ENCODE measurements at regions of chr2 and their contacts with region 1.

Region 1: GRCh38 chr2:223957092-223957851 is at the start of gene MRPL44:
- DNase-seq: peak; percentile 94 to 99 (median 97)
- H3K4me3 ChIP-seq: peak within 1 kb of the TSS; percentile 68 to 97 (median 91)
- H3K4me3 Mint-ChIP-seq: peak within 1 kb of the TSS; percentile 91 to 96
- H3K27ac ChIP-seq: peak within 1 kb of the TSS; percentile 93 to 96
- H3K27ac Mint-ChIP-seq: peak within 1 kb of the TSS; percentile 90 to 98 (median 93)
- H3K4me1 ChIP-seq: peaks cover 41 to 57% of the 10 kb centered on the region in 2 donors
- H3K4me1 Mint-ChIP-seq: peaks cover 57% of the 10 kb centered on the region
- H3K27me3 ChIP-seq: no peaks in the 10 kb centered on the region
- H3K27me3 Mint-ChIP-seq: peaks cover 0 to under 1% (median 0%) of the 10 kb centered on the region in 3 donors
- CTCF ChIP-seq: no peak
- polyA plus RNA-seq, gene MRPL44: 7.5 to 28.4 (median 25.7) TPM

Region 2: DNA sequence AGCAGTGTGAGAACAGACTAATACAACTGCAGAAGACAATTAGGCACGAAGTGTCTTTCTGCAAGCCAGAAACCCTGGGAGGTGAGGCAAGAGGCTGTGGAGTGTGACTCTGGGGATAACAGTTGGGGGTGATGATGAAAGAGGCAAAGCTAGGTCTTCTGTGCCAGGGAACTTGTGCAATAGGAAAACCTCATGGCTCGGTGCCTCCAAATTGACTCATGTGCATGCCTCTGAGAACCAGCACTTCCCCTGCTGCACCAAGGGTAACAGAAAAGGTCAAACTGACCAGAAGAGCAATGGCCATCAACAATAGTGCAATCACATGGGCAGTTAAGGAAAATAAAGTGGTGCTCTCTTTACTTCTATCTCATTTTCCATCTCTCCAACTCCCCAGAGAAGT is 491.5 kb before region 1 on chr2:
- intact Hi-C with region 1: loop called in 1 of 2 experiments (anchors 10 kb)
- DNase-seq: peak; percentile 96 to 98 (median 98)
- H3K4me3 ChIP-seq: no peak overlapping the region
- H3K4me3 Mint-ChIP-seq: peak overlapping the region in 1 of 2 donors; percentile 69
- H3K27ac ChIP-seq: peak overlapping the region; percentile 56 to 92
- H3K27ac Mint-ChIP-seq: peak overlapping the region; percentile 92 to 99 (median 96)
- H3K4me1 ChIP-seq: peaks cover 58 to 71% of the 10 kb centered on the region in 2 donors
- H3K4me1 Mint-ChIP-seq: peaks cover 68% of the 10 kb centered on the region
- H3K27me3 ChIP-seq: no peaks in the 10 kb centered on the region
- H3K27me3 Mint-ChIP-seq: peaks cover 0 to 3% (median 3%) of the 10 kb centered on the region in 3 donors
- CTCF ChIP-seq: no peak

Region 3: GRCh38 chr2:223837287-223838061 is 119.8 kb before region 1 on chr2 and contains the start of gene AP1S3:
- intact Hi-C with region 1: loop called in 1 of 2 experiments (anchors 10 kb)
- DNase-seq: peak; percentile 30 to 89 (median 47)
- H3K4me3 ChIP-seq: peak within 1 kb of the TSS; percentile 58 to 83 (median 77)
- H3K4me3 Mint-ChIP-seq: peak within 1 kb of the TSS; percentile 98
- H3K27ac ChIP-seq: peak within 1 kb of the TSS in 1 of 2 donors; percentile 21
- H3K27ac Mint-ChIP-seq: peak within 1 kb of the TSS; percentile 65 to 89 (median 85)
- H3K4me1 ChIP-seq: peaks cover 23 to 24% of the 10 kb centered on the region in 2 donors
- H3K4me1 Mint-ChIP-seq: peaks cover 32% of the 10 kb centered on the region
- H3K27me3 ChIP-seq: no peaks in the 10 kb centered on the region
- H3K27me3 Mint-ChIP-seq: peaks cover 2 to 3% (median 3%) of the 10 kb centered on the region in 3 donors
- CTCF ChIP-seq: no peak
- polyA plus RNA-seq, gene AP1S3: 0.80 to 1.3 (median 0.81) TPM

Region 4: GRCh38 chr2:223970343-223971128 is 13.3 kb after region 1 on chr2:
- intact Hi-C with region 1: no loop called
- DNase-seq: peak; percentile 43 to 67 (median 60)
- H3K4me3 ChIP-seq: no peak overlapping the region
- H3K4me3 Mint-ChIP-seq: no peak overlapping the region
- H3K27ac ChIP-seq: no peak overlapping the region
- H3K27ac Mint-ChIP-seq: peak overlapping the region in 1 of 7 donors; percentile 4
- H3K4me1 ChIP-seq: no peaks in the 10 kb centered on the region
- H3K4me1 Mint-ChIP-seq: peaks cover 3% of the 10 kb centered on the region
- H3K27me3 ChIP-seq: no peaks in the 10 kb centered on the region
- H3K27me3 Mint-ChIP-seq: no peaks in the 10 kb centered on the region
- CTCF ChIP-seq: peak; percentile 98

Region 5: GRCh38 chr2:224585205-224586088 is 628.2 kb after region 1 on chr2 and contains the start of gene CUL3:
- intact Hi-C with region 1: loop called in 1 of 2 experiments (anchors 10 kb)
- DNase-seq: peak; percentile 91 to 98 (median 97)
- H3K4me3 ChIP-seq: peak within 1 kb of the TSS; percentile 92 to 99 (median 94)
- H3K4me3 Mint-ChIP-seq: peak within 1 kb of the TSS; percentile 99
- H3K27ac ChIP-seq: peak within 1 kb of the TSS; percentile 79 to 88
- H3K27ac Mint-ChIP-seq: peak within 1 kb of the TSS; percentile 93 to 98 (median 97)
- H3K4me1 ChIP-seq: peaks cover 32 to 38% of the 10 kb centered on the region in 2 donors
- H3K4me1 Mint-ChIP-seq: peaks cover 37% of the 10 kb centered on the region
- H3K27me3 ChIP-seq: no peaks in the 10 kb centered on the region
- H3K27me3 Mint-ChIP-seq: peaks cover 0 to 2% (median 0%) of the 10 kb centered on the region in 3 donors
- CTCF ChIP-seq: no peak
- polyA plus RNA-seq, gene CUL3: 12.3 to 28.7 (median 12.9) TPM

Measured in CD14-positive monocyte (primary cell).